ENCODE measurements at regions of chr11 and their contacts with region 1.

Region 1: GRCh38 chr11:120344302-120345004 is 8.2 kb downstream of the ARHGEF12 start:
- DNase-seq: peak in 1 of 2 donors; percentile 48
- H3K4me3 ChIP-seq: no peak overlapping the region
- H3K27ac ChIP-seq: no peak overlapping the region
- H3K4me1 ChIP-seq: peaks cover 12 to 93% (median 73%) of the 10 kb centered on the region in 4 donors
- H3K27me3 ChIP-seq: no peaks in the 10 kb centered on the region
- CTCF ChIP-seq: no peak
- EP300 ChIP-seq: no peak
- POLR2A ChIP-seq: no peak

Region 2: DNA sequence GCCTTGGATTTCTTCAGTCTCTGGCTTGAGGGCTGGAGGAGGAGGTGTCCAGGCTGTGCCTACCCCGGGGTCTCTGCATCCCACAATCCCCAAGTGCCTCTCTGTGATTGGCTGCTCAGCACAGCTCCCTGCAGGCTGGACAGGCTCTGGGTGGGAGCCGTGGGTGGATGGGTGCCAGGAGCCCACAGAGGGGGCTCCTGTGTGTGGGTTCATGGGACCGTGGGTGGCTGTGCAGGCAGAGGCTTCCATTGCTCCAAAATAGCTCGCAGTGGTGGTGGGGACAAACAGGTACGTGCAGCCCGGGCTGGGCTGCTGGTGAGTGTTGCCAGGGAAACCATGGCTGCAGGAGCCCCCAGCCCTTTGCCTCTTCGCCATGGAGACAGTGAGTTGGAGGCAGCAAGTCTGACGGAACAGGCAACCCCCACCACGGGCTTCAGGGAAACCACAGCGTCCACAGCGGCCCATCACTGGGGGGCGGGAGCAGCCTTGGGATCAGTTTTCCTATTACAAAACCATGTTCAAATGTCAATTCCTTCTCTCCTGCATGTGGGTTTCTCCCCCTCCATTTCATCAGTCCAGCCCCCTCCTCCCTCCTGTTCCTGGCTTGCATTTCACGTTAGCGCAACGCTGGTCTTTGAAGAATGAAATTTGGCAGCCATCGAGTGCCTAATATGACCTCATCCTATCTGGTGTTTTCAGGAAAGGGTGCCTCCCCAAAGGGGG is 361.8 kb before region 1 on chr11:
- intact Hi-C with region 1: no loop called
- DNase-seq: peak in 1 of 2 donors; percentile 55
- H3K4me3 ChIP-seq: no peak overlapping the region
- H3K27ac ChIP-seq: no peak overlapping the region
- H3K4me1 ChIP-seq: no peaks in the 10 kb centered on the region
- H3K27me3 ChIP-seq: peaks cover 0 to 49% (median 4%) of the 10 kb centered on the region in 3 donors
- CTCF ChIP-seq: no peak
- EP300 ChIP-seq: no peak
- POLR2A ChIP-seq: no peak

Region 3: DNA sequence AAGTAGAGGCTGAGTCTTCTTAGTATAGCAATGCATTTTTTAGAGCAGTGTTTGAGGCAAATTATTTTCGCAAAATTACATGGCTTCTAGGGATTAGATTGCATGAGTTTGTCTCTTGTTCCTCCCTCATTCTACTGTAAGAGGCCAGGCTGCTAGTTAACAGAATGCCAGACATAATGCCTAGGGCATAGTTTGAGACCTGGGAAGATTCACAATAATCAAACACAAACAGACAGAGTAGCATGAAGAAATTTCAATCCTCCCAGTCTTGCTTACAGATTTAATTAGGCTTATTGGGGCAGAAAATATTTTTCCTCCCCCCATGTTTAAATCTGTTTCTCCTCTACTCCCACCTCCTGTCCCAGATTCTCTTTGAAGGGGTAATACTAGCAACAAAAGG is 40.0 kb after region 1 on chr11:
- intact Hi-C with region 1: loop called (anchors 5 kb)
- DNase-seq: no peak
- H3K4me3 ChIP-seq: no peak overlapping the region
- H3K27ac ChIP-seq: no peak overlapping the region
- H3K4me1 ChIP-seq: peaks cover 8 to 87% (median 55%) of the 10 kb centered on the region in 4 donors
- H3K27me3 ChIP-seq: no peaks in the 10 kb centered on the region
- CTCF ChIP-seq: no peak
- EP300 ChIP-seq: no peak
- POLR2A ChIP-seq: no peak

Measured in stomach (tissue), 19 donors.